ENCODE measurements at regions of chr11 and their contacts with region 1.

Region 1: DNA sequence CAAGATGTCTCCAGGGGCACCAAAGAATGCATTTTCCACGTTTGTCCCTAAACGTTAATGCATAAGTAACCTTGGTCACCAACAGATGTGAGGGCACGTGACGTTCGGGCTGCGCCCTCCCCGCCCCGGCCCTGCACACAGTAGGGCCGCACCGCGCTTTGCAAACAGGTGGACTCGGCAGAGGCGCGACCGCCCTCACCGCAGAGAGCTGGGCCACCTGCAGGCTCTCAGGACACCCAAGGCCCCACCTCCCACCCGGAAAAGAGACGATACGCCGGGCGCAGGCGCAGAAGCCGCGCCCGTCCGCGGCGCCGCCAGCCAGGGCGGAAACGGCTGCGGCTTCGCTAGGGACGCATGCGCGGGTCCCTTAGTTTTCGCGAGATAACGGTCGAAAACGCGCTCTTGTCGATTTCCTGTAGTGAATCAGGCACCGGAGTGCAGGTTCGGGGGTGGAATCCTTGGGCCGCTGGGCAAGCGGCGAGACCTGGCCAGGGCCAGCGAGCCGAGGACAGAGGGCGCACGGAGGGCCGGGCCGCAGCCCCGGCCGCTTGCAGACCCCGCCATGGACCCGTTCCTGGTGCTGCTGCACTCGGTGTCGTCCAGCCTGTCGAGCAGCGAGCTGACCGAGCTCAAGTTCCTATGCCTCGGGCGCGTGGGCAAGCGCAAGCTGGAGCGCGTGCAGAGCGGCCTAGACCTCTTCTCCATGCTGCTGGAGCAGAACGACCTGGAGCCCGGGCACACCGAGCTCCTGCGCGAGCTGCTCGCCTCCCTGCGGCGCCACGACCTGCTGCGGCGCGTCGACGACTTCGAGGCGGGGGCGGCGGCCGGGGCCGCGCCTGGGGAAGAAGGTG is at the start of gene FADD:
- DNase-seq: peak; percentile 85 to 94
- H3K4me3 ChIP-seq: peak within 1 kb of the TSS; percentile 94 to 100
- H3K27ac ChIP-seq: peak within 1 kb of the TSS; percentile 85 to 95
- H3K4me1 ChIP-seq: peaks cover 0 to 26% (median 18%) of the 10 kb centered on the region in 4 donors
- H3K27me3 ChIP-seq: peaks cover 0 to 4% of the 10 kb centered on the region in 2 donors
- CTCF ChIP-seq: peak in 1 of 2 experiments; percentile 13

Region 2: DNA sequence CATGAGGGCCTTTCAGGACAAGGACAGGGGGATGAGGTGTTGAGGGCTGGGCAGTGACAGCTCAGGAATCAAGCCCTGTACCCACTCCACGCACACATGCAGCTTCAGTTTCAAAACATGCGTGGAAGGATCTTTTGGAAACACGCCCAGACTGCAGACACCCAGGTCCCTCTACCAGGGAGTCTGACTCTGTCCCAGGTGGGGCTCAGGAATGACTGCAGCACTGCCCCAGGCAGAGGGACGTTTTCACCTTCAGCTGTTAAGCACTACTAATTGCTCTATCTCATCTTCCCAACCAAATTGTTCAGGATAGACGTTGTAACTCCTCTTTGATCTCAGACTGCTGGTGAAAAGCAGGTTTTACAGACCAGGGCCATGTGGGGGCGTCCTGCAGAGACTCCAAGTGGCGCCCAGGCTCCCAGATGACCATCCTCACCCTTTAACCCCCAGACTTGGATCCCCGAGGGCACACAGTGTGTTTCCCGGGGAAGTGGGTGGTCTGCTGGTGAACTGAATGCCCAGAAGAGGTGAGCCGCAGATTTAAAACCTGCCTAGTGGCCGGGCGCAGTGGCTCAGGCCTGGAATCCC is 23.8 kb after region 1 on chr11:
- intact Hi-C with region 1: no loop called
- DNase-seq: no peak
- H3K4me3 ChIP-seq: no peak overlapping the region
- H3K27ac ChIP-seq: no peak overlapping the region
- H3K4me1 ChIP-seq: peaks cover 0 to 15% (median 4%) of the 10 kb centered on the region in 4 donors
- H3K27me3 ChIP-seq: no peaks in the 10 kb centered on the region
- CTCF ChIP-seq: no peak

Region 3: GRCh38 chr11:70270104-70270876 is 67.2 kb after region 1 on chr11 and contains the start of gene PPFIA1:
- intact Hi-C with region 1: loop called (anchors 10 kb)
- DNase-seq: peak; percentile 93 to 97
- H3K4me3 ChIP-seq: peak within 1 kb of the TSS; percentile 88
- H3K27ac ChIP-seq: peak within 1 kb of the TSS; percentile 81 to 85
- H3K4me1 ChIP-seq: peaks cover 0 to 27% (median 12%) of the 10 kb centered on the region in 4 donors
- H3K27me3 ChIP-seq: no peaks in the 10 kb centered on the region
- CTCF ChIP-seq: no peak

Measured in tibial artery (tissue), 4 donors.